ENCODE measurements at regions of chr17 and their contacts with region 1.

Region 1: DNA sequence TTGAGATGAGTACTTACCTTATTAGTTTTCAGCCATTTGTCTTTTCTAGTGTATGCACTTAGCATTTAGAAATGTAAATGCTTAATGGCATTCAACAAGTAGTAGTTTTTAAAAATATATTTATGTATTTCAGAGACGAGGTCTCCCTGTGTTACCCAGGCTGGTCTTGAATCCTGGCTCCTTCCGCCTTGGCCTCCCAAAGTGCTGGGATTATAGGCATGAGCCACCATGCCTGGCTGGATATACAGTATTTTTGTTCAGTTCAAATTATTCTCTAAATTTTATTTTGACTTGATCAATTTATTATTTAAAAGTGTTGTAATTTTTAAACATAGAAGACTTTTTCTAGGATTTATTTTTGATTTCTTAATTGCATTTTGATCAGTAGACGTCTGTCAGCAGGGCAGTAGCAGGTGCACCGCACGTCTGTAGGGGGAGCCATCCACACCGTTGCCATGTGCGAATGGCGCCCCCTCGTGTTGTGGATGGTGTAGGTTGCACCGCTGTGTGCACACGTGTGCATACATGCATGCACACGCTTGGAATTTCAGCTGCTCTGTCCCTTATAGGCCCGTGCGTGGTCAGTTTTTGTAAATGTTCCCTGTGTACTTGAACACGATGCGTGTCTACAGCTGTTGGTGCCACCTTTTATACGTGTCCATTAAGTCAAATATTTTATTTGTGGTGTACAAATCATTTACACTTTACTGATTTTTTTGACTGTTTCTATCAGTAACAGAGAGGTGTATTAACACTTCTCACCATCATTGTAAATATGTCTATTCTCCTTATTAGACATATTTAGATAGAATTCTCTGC is 30.6 kb downstream of the RPTOR start:
- DNase-seq: peak; percentile 31
- H3K4me3 ChIP-seq: no peak overlapping the region
- CTCF ChIP-seq: peak; percentile 100

Region 2: GRCh38 chr17:80359422-80360110 is 215.7 kb before region 1 on chr17:
- CTCF ChIA-PET with region 1: no interaction called
- POLR2A ChIA-PET with region 1: no interaction called
- DNase-seq: no peak
- H3K4me3 ChIP-seq: no peak overlapping the region
- CTCF ChIP-seq: no peak

Region 3: DNA sequence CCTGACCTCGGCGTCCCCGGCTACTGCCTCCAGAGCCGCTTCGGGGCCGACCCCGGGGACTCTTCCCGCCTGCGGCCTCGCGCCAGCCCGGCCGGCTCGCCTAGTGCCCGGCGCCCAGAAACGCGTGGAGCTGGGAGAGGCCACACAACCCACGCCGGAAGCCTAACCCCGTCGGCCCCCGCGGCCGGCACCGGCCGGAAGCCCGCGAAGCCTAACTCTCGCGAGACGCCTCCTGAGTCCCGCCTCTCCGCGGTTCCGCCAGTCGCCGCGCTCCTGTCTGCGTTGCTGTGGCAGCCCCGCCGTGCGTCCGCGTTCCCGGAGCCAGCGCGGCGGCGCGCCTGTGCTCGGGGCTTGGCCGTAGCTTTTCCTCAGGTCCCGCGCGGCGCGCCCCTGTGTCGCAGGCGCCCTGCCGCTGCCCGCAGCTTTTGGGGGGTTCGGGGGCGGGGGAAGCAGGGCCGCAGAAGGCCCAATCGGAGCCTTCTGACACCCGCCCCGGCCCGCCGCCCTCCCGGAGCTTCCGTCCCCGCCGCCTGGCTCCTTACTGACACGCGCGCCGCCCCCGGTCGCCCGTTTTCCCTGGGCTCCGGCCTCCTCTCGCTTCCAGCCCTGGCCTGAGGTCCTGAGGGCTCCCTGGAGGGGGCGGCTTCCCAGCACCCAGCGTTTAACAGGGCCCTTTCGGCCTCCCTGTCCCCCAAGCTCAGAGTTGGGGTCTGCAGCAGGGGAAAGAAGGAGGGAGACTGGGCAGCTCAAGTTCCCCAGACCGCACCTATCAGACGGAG is 120.5 kb before region 1 on chr17:
- CTCF ChIA-PET with region 1: interaction called, 25 read pairs
- POLR2A ChIA-PET with region 1: no interaction called
- DNase-seq: peak; percentile 63
- H3K4me3 ChIP-seq: peak overlapping the region; percentile 78
- CTCF ChIP-seq: no peak

Region 4: GRCh38 chr17:80477647-80478478 is 97.4 kb before region 1 on chr17:
- CTCF ChIA-PET with region 1: interaction called, 12 read pairs
- POLR2A ChIA-PET with region 1: no interaction called
- DNase-seq: no peak
- H3K4me3 ChIP-seq: peak overlapping the region; percentile 32
- CTCF ChIP-seq: peak; percentile 84

Region 5: DNA sequence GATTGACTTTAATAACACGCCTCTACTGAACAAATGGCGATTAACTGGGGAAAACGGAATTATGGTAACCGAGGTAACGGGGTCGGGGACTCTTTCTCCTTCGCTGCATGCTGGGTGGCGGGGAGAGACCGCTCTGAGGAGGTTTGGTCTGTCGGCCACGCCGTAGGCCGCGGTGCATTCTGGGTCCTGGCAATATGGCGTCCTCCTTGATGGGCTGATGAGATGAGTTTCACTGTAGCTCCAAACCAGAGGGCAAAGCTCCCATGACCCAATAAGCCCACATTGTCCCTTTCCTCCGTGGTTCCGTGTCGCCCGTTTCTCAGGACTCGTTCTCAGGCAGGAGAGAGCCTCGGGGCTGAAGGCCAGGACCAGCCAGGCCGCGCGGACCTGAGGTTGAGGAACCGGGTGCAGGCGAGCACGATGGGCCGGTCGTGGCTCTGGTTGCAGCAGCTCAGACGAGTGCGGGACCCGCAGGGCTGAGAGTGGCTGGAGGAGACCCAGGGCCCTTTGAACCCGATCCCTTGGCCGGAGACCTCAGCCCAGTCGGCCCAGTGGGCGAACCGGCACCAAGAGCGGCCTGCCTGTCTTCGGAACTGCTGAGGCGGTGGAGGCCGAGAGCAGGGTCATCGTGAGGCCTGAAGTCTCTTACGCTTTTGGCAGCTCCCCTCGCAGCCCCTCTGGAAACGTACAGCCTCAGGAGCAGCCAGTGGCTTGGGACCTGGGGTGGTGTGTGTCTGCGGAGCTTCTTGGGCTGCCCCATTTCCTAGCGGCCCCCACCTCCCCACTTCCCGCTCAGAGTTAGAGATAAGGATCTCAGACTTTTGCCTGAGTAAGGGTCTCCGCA is 30.4 kb before region 1 on chr17 and contains the start of gene RPTOR:
- CTCF ChIA-PET with region 1: interaction called, 13 read pairs
- POLR2A ChIA-PET with region 1: no interaction called
- DNase-seq: peak; percentile 46
- H3K4me3 ChIP-seq: peak within 1 kb of the TSS; percentile 97
- CTCF ChIP-seq: no peak

Region 6: DNA sequence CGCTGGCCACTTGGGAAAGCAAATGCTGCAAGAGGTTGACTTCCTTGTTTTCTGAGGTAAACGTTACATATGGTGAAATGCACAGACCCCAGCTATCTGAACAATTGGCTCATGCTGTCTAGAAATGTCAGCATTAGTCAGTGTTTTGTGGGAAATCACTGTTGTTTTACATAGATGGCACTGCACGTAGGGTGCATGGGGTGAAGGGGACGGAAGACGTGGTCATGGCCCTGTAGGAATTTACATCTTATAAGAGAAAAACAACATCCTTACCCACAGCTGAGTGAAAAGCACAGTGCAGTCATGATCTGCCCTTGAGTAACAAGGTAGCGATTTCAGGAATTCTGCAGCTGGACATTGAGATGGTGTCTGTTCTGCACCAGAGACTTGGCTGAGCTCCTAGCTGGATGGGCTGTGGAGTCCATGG is 15.4 kb before region 1 on chr17:
- CTCF ChIA-PET with region 1: interaction called, 94 read pairs
- POLR2A ChIA-PET with region 1: no interaction called
- DNase-seq: peak; percentile 76
- H3K4me3 ChIP-seq: no peak overlapping the region
- CTCF ChIP-seq: no peak

Region 7: DNA sequence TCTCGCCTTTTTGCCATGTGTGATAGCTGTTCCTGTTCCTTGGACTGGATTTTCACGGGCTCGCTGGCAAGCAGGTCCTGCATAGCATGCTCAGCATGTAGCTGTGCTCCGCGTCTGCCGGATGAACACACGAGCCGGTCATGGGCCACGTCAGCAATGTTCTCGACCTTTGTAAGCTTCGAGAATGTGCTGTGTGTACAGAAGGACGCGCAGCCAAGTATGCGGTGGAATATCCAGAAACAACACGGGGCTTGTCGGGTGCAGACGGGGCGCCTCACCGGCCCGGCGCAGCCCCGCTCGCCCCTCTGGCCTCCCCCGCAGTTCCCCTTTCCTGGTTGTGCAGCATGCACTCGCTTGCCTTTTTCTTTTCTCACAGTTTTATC is 11.6 kb after region 1 on chr17:
- CTCF ChIA-PET with region 1: interaction called, 35 read pairs
- POLR2A ChIA-PET with region 1: no interaction called
- DNase-seq: no peak
- H3K4me3 ChIP-seq: no peak overlapping the region
- CTCF ChIP-seq: no peak

Region 8: DNA sequence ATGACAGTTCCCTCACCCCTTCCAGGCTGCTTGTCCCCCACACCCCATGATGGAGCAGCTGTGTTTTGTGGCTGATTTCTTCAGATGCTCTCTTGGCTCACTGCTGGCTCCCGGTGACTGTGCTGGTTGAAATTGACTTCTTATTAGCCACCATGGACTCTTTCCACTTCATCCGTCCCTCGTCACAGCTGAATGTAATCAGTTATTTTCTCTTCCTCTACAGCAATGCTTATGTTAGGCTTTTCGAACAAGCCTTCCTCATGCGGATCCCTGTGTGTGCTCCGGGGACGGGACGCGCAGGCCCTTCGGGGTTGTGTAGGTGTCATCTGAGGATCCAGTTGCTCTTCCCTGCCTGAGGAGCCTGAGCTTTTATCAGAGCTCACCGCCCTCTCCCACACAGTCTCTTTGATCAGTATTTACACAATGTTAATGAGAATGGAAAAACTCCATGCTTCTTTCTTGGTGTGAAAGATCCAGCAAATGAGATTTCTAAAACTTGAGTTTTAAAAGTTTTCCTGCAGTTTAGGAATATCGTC is 56.8 kb after region 1 on chr17:
- CTCF ChIA-PET with region 1: no interaction called
- POLR2A ChIA-PET with region 1: no interaction called
- DNase-seq: no peak
- H3K4me3 ChIP-seq: no peak overlapping the region
- CTCF ChIP-seq: no peak

Region 9: DNA sequence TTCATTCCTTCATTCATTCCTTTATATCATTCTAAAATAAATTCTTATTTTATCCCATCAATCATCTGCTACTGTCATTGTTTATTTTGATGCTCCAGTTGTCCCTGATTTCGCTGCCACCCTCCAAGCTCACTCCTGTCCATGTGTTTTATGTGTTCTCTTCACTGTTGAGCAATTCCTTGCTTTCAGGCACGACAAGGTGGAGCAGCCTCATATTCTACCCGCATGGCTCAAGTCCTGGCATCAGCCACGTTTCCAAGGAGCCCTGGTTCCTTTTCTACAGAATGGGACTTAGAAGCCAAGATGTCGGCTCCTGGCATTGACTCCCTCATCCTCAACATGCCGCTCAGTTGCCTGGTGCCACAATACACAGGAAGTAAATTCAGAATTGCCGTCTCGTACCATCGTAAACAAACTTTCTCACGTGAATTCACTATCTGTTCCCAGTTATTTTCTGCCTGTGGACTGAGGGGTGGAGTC is 108.4 kb after region 1 on chr17:
- CTCF ChIA-PET with region 1: no interaction called
- POLR2A ChIA-PET with region 1: no interaction called
- DNase-seq: no peak
- H3K4me3 ChIP-seq: no peak overlapping the region
- CTCF ChIP-seq: no peak

Measured in AG04449 (cell line).